Mammary epithelial cell (primary cell): ENCODE measurements at regions of chr1 and their contacts with region 1.

Region 1: DNA sequence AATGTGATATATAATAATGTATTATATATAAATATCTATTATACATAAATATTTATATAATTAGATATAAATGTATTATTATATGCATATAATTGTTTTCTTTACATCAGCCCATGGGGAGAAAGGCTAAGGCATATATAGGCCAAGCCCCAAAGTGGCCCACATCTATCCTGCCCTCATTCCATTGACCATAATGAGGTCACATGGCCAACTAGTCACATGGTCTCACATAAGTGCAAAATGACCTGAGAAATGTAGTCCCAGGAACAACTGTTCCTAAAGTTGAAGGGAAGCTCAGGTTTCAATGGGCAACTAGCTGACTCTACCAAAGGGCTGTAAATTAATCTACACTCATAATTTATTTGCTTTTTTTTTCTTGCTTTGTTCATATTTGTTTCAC is 14.5 kb upstream of the CCDC185 start:
- DNase-seq: no peak
- H3K4me3 ChIP-seq: no peak overlapping the region
- H3K27ac ChIP-seq: no peak overlapping the region
- H3K4me1 ChIP-seq: no peaks in the 10 kb centered on the region
- H3K27me3 ChIP-seq: no peaks in the 10 kb centered on the region
- CTCF ChIP-seq: no peak

Region 2: DNA sequence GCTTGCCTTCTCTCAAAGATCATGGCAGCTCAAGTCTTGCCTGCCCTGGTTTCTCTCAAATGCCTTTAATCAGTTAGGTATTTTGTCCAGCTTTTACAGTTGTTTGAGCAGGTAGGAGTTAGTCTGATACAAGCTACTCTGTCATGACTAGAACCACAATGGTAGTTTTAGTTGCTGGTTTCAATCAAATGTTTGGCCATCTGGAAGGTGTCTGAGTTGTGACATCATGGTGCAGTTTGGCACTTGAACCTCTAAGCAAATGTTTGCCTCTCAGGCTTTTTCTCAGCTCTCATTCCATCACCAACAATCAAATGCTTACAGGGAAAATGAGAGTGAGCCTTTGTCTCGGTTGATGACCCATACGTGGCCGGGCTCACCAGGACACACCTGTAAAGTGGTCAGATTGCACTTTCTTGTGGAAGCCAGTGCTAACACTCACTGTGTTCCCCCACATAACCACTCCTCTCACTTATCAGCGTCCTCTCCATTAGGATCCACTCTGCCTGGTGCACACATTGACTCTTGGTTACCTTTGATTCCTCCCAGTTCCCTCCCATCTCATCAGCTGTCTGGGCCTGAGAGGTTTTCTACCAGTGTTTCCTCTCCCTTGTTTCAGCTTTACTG is 81.9 kb after region 1 on chr1:
- CTCF ChIA-PET with region 1: interaction called, 3 read pairs
- dilution Hi-C with region 1: loop called (anchors 5 kb)
- in situ Hi-C with region 1: no loop called
- intact Hi-C with region 1: no loop called
- DNase-seq: no peak
- H3K4me3 ChIP-seq: no peak overlapping the region
- H3K27ac ChIP-seq: no peak overlapping the region
- H3K4me1 ChIP-seq: no peaks in the 10 kb centered on the region
- H3K27me3 ChIP-seq: no peaks in the 10 kb centered on the region
- CTCF ChIP-seq: no peak